CD4-positive, alpha-beta T cell (primary cell): ENCODE measurements at regions of chr1 and their contacts with region 1.

Region 1: DNA sequence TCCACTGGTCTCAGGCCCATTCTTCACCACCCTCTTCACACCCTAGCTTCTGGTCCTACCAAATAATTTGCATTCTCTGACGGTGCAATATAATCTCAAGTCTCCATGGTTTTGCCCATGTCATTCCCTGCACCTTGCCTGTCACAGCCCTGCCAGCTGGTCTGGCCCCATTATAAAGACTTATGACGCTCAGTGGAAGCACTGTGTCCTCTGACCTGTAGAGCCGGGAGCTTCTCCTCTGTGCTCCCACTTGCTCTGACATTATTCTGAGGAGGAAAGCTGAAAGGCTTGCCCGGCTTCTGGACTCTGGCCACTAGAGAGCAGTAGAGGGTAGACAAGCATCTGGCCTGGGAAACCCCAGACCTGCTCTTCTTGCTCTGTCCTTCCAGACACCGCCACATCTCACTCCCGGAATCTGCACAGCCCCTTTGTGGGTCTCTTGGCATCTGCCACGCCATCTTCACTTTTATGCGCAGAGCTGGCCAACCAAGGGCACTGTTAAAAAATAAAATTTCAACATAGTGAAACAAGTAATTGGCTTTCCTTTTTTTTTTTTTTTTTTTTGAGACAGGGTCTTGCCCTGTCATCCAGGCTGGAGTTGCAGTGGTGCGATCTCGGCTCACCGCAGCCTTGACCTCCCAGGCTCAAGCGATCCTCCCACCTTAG is 44.4 kb downstream of the NENF start:
- DNase-seq: peak; percentile 57 to 88 (median 63)
- ATAC-seq: peak; percentile 99
- H3K4me3 ChIP-seq: no peak overlapping the region
- H3K4me3 Mint-ChIP-seq: peak overlapping the region; percentile 51
- H3K27ac ChIP-seq: no peak overlapping the region
- H3K27ac Mint-ChIP-seq: no peak overlapping the region
- H3K4me1 ChIP-seq: peaks cover 13% of the 10 kb centered on the region
- H3K4me1 Mint-ChIP-seq: peaks cover 6% of the 10 kb centered on the region
- H3K27me3 ChIP-seq: no peaks in the 10 kb centered on the region
- H3K27me3 Mint-ChIP-seq: peaks cover 12% of the 10 kb centered on the region
- CTCF ChIP-seq: peak; percentile 86

Region 2: GRCh38 chr1:212346601-212347000 is 130.5 kb before region 1 on chr1:
- CTCF ChIA-PET with region 1: no interaction called
- POLR2A ChIA-PET with region 1: no interaction called
- intact Hi-C with region 1: no loop called
- DNase-seq: no peak
- ATAC-seq: no peak
- H3K4me3 ChIP-seq: no peak overlapping the region
- H3K4me3 Mint-ChIP-seq: no peak overlapping the region
- H3K27ac ChIP-seq: no peak overlapping the region
- H3K27ac Mint-ChIP-seq: no peak overlapping the region
- H3K4me1 ChIP-seq: no peaks in the 10 kb centered on the region
- H3K4me1 Mint-ChIP-seq: peaks cover 17% of the 10 kb centered on the region
- H3K27me3 ChIP-seq: no peaks in the 10 kb centered on the region
- H3K27me3 Mint-ChIP-seq: no peaks in the 10 kb centered on the region
- CTCF ChIP-seq: no peak

Region 3: GRCh38 chr1:212630158-212630900 is 153.2 kb after region 1 on chr1:
- CTCF ChIA-PET with region 1: interaction called, 15 read pairs
- POLR2A ChIA-PET with region 1: no interaction called
- intact Hi-C with region 1: loop called (anchors 1 kb)
- DNase-seq: peak; percentile 22 to 81 (median 46)
- ATAC-seq: peak; percentile 99
- H3K4me3 ChIP-seq: no peak overlapping the region
- H3K4me3 Mint-ChIP-seq: no peak overlapping the region
- H3K27ac ChIP-seq: no peak overlapping the region
- H3K27ac Mint-ChIP-seq: no peak overlapping the region
- H3K4me1 ChIP-seq: peaks cover 12% of the 10 kb centered on the region
- H3K4me1 Mint-ChIP-seq: peaks cover 5% of the 10 kb centered on the region
- H3K27me3 ChIP-seq: no peaks in the 10 kb centered on the region
- H3K27me3 Mint-ChIP-seq: no peaks in the 10 kb centered on the region
- CTCF ChIP-seq: peak; percentile 79

Region 4: GRCh38 chr1:212782422-212783154 is 305.4 kb after region 1 on chr1:
- CTCF ChIA-PET with region 1: interaction called, 13 read pairs
- POLR2A ChIA-PET with region 1: no interaction called
- intact Hi-C with region 1: loop called (anchors 2 kb)
- DNase-seq: peak in 3 of 14 experiments; percentile 40 to 59 (median 47)
- ATAC-seq: peak; percentile 60
- H3K4me3 ChIP-seq: no peak overlapping the region
- H3K4me3 Mint-ChIP-seq: no peak overlapping the region
- H3K27ac ChIP-seq: no peak overlapping the region
- H3K27ac Mint-ChIP-seq: peak overlapping the region; percentile 11
- H3K4me1 ChIP-seq: no peaks in the 10 kb centered on the region
- H3K4me1 Mint-ChIP-seq: peaks cover 8% of the 10 kb centered on the region
- H3K27me3 ChIP-seq: no peaks in the 10 kb centered on the region
- H3K27me3 Mint-ChIP-seq: no peaks in the 10 kb centered on the region
- CTCF ChIP-seq: peak; percentile 72

Region 5: DNA sequence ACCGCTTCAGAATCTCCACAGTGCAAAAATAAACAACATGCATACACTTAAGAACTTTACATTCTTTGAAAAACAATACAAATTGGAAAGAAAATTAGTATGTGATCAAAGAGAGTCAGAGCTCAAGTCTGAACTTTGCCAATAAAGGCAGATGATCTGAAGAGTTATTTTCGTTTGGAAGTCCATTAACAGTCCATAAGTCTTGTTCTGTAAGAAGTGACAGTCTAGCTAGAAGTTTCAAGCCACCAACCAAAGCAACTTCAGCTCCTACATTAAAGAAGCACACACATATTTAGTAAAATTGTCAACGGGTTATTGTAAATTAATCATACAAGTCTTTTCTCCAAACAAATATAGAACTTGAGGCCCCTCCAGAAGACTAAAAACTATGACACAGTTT is 517.8 kb after region 1 on chr1:
- CTCF ChIA-PET with region 1: interaction called, 9 read pairs
- POLR2A ChIA-PET with region 1: no interaction called
- intact Hi-C with region 1: loop called (anchors 1 to 5 kb)
- DNase-seq: no peak
- ATAC-seq: no peak
- H3K4me3 ChIP-seq: no peak overlapping the region
- H3K4me3 Mint-ChIP-seq: no peak overlapping the region
- H3K27ac ChIP-seq: no peak overlapping the region
- H3K27ac Mint-ChIP-seq: no peak overlapping the region
- H3K4me1 ChIP-seq: no peaks in the 10 kb centered on the region
- H3K4me1 Mint-ChIP-seq: peaks cover 8% of the 10 kb centered on the region
- H3K27me3 ChIP-seq: no peaks in the 10 kb centered on the region
- H3K27me3 Mint-ChIP-seq: no peaks in the 10 kb centered on the region
- CTCF ChIP-seq: no peak